ENCODE measurements at regions of chr17 and their contacts with region 1.

Region 1: GRCh38 chr17:27879987-27880608 is 13.1 kb downstream of the LYRM9 start:
- DNase-seq: no peak
- H3K4me3 ChIP-seq: no peak overlapping the region
- H3K27me3 ChIP-seq: no peaks in the 10 kb centered on the region
- CTCF ChIP-seq: peak; percentile 90

Region 2: GRCh38 chr17:27654654-27655524 is 225.2 kb before region 1 on chr17:
- CTCF ChIA-PET with region 1: interaction called, 36 read pairs
- POLR2A ChIA-PET with region 1: no interaction called
- DNase-seq: no peak
- H3K4me3 ChIP-seq: no peak overlapping the region
- H3K27me3 ChIP-seq: no peaks in the 10 kb centered on the region
- CTCF ChIP-seq: peak; percentile 82

Region 3: GRCh38 chr17:27766438-27766837 is 113.7 kb before region 1 on chr17:
- CTCF ChIA-PET with region 1: interaction called, 147 read pairs
- POLR2A ChIA-PET with region 1: no interaction called
- DNase-seq: no peak
- H3K4me3 ChIP-seq: no peak overlapping the region
- H3K27me3 ChIP-seq: no peaks in the 10 kb centered on the region; the same call in none of the 2 replicates
- CTCF ChIP-seq: no peak

Region 4: GRCh38 chr17:27834571-27834970 is 45.5 kb before region 1 on chr17:
- CTCF ChIA-PET with region 1: interaction called, 11 read pairs
- POLR2A ChIA-PET with region 1: no interaction called
- DNase-seq: no peak
- H3K4me3 ChIP-seq: no peak overlapping the region
- H3K27me3 ChIP-seq: 0 out of 2 replicates have a peak, but pooled peaks cover 1% of the 10 kb centered on the region
- CTCF ChIP-seq: no peak

Region 5: GRCh38 chr17:27892866-27893769 is 13.0 kb after region 1 on chr17 and contains the start of gene LYRM9:
- CTCF ChIA-PET with region 1: interaction called, 47 read pairs
- POLR2A ChIA-PET with region 1: no interaction called
- DNase-seq: peak; percentile 27
- H3K4me3 ChIP-seq: peak within 1 kb of the TSS; percentile 62
- H3K27me3 ChIP-seq: peaks cover 4% of the 10 kb centered on the region; the same call in 1 of the 2 replicates
- CTCF ChIP-seq: peak; percentile 78
- polyA plus RNA-seq, gene LYRM9: 6.5 and 7.0 TPM in 2 replicates

Region 6: GRCh38 chr17:28086519-28086918 is 206.4 kb after region 1 on chr17:
- CTCF ChIA-PET with region 1: no interaction called
- POLR2A ChIA-PET with region 1: no interaction called
- DNase-seq: no peak
- H3K4me3 ChIP-seq: no peak overlapping the region
- H3K27me3 ChIP-seq: no peaks in the 10 kb centered on the region
- CTCF ChIP-seq: no peak